CD4-positive, alpha-beta T cell (primary cell): ENCODE measurements at regions of chr10 and their contacts with region 1.

Region 1: GRCh38 chr10:7484456-7485243 is 73.8 kb upstream of the SFMBT2 start:
- DNase-seq: peak; percentile 38 to 88 (median 62)
- ATAC-seq: peak; percentile 83
- H3K4me3 ChIP-seq: peak overlapping the region; percentile 46
- H3K4me3 Mint-ChIP-seq: peak overlapping the region; percentile 83
- H3K27ac ChIP-seq: peak overlapping the region; percentile 62 to 80
- H3K27ac Mint-ChIP-seq: peak overlapping the region; percentile 95
- H3K4me1 ChIP-seq: peaks cover 72% of the 10 kb centered on the region
- H3K4me1 Mint-ChIP-seq: peaks cover 90% of the 10 kb centered on the region
- H3K27me3 ChIP-seq: no peaks in the 10 kb centered on the region
- H3K27me3 Mint-ChIP-seq: no peaks in the 10 kb centered on the region
- CTCF ChIP-seq: no peak

Region 2: GRCh38 chr10:7471720-7472367 is 12.8 kb before region 1 on chr10:
- CTCF ChIA-PET with region 1: interaction called, 3 read pairs
- POLR2A ChIA-PET with region 1: interaction called, 15 read pairs
- intact Hi-C with region 1: no loop called
- DNase-seq: peak in 4 of 14 experiments; percentile 21 to 43 (median 42)
- ATAC-seq: peak; percentile 61
- H3K4me3 ChIP-seq: peak overlapping the region; percentile 52
- H3K4me3 Mint-ChIP-seq: peak overlapping the region; percentile 82
- H3K27ac ChIP-seq: peak overlapping the region in 1 of 2 donors; percentile 44
- H3K27ac Mint-ChIP-seq: peak overlapping the region; percentile 85
- H3K4me1 ChIP-seq: peaks cover 14% of the 10 kb centered on the region
- H3K4me1 Mint-ChIP-seq: peaks cover 50% of the 10 kb centered on the region
- H3K27me3 ChIP-seq: no peaks in the 10 kb centered on the region
- H3K27me3 Mint-ChIP-seq: no peaks in the 10 kb centered on the region
- CTCF ChIP-seq: no peak

Region 3: DNA sequence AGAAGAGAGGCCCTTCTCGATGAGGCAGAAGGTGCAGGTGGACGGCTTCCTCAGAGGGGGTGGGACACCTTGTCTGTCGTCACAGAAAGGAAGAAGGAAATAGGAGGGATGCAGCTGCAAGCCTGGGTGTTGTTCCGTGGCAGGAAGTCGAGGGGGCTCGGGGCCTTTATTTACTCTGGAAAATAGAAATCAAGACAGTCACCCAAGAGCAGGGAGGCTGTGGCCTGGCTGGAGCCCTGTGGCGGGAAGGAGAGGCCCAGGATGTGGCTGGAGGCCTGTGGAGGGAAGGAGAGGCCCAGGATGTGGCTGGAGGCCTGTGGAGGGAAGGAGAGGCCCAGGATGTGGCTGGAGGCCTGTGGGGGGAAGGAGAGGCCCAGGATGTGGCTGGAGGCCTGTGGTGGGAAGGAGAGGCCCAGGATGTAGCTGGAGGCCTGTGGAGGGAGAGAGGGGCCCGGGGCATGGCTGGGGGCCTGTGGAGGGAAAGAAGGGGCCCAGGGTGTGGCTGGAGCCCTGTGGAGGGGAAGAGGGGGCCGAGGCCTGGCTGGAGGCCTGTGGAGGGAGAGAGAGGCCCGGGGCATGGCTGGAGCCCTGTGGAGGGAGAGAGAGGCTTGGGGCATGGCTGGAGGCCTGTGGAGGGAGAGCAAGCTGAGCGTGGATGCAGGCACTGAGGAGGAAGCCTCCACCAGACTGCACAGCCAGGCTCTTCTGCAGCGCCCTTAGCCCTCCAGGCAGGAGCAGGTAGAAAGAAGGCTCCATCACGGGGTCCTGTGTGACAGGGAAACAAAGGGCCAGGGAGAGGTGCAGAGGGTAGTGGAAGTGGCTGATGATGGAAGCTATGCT is 23.5 kb after region 1 on chr10:
- CTCF ChIA-PET with region 1: no interaction called
- POLR2A ChIA-PET with region 1: interaction called, 21 read pairs
- intact Hi-C with region 1: no loop called
- DNase-seq: peak in 7 of 14 experiments; percentile 7 to 62 (median 25)
- ATAC-seq: peak; percentile 71
- H3K4me3 ChIP-seq: no peak overlapping the region
- H3K4me3 Mint-ChIP-seq: peak overlapping the region; percentile 16
- H3K27ac ChIP-seq: peak overlapping the region; percentile 65 to 75
- H3K27ac Mint-ChIP-seq: peak overlapping the region; percentile 91
- H3K4me1 ChIP-seq: peaks cover 40% of the 10 kb centered on the region
- H3K4me1 Mint-ChIP-seq: peaks cover 65% of the 10 kb centered on the region
- H3K27me3 ChIP-seq: no peaks in the 10 kb centered on the region
- H3K27me3 Mint-ChIP-seq: no peaks in the 10 kb centered on the region
- CTCF ChIP-seq: no peak